Right lobe of liver (tissue), 6 donors: ENCODE measurements at regions of chr3 and their contacts with region 1.

Region 1: DNA sequence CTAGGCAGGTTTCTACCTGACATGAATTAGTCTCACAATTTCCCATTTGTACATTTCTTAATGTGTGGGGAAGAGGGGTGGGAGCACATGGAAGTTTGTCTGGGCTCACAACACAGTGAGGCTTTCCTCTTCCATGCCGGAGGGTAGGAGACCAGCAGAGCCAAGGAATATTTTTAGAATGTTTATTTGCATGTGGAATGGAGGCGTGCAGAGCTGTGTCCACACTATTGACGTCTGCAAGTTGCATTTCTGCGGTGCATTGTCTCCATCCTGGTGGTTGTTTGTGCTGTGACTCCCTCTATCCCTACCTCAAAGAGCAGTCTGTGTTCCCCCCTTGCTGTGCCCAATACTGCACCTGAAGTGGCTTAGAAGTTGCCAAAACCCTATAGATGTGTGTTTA is 103.1 kb upstream of the LRTM1 start:
- DNase-seq: no peak
- ATAC-seq: no peak
- H3K4me3 ChIP-seq: no peak overlapping the region
- H3K27ac ChIP-seq: no peak overlapping the region
- H3K4me1 ChIP-seq: no peaks in the 10 kb centered on the region
- H3K27me3 ChIP-seq: no peaks in the 10 kb centered on the region
- CTCF ChIP-seq: no peak
- POLR2A ChIP-seq: no peak

Region 2: DNA sequence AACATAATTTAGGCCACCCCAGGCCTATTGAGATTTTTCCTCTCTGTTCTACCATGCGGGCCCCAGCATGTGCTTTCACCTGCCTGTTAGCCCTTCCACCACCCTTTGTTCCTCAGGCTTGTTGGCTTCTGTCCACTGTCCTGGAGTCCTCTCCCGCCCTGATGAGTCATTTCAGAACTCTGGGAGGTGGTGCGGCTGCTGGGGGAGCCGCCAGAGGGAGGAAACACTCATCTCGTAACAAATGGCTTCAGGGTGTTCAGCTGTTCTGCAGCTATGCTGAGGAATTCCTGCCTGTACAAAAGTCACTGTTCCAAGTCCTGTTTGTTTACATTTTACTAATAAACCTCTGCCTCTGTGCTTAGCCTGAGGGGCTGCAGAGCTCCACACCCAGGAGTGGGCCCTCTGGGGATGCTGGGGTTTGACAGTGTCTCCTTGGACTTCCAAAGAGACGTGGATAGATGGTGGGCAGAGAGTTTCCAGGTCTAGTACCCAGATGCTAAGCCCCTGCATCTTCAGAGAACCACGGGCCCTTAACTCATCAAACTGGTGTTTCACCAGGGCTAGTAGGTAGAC is 139.3 kb before region 1 on chr3:
- intact Hi-C with region 1: no loop called
- DNase-seq: peak in 1 of 3 donors; percentile 24
- ATAC-seq: peak; percentile 40 to 75 (median 60)
- H3K4me3 ChIP-seq: no peak overlapping the region
- H3K27ac ChIP-seq: no peak overlapping the region
- H3K4me1 ChIP-seq: no peaks in the 10 kb centered on the region
- H3K27me3 ChIP-seq: no peaks in the 10 kb centered on the region
- CTCF ChIP-seq: peak; percentile 7 to 17 (median 12)
- POLR2A ChIP-seq: no peak

Region 3: GRCh38 chr3:54917174-54917573 is 113.8 kb before region 1 on chr3:
- intact Hi-C with region 1: no loop called
- DNase-seq: no peak
- ATAC-seq: no peak
- H3K4me3 ChIP-seq: no peak overlapping the region
- H3K27ac ChIP-seq: no peak overlapping the region
- H3K4me1 ChIP-seq: no peaks in the 10 kb centered on the region
- H3K27me3 ChIP-seq: no peaks in the 10 kb centered on the region
- CTCF ChIP-seq: no peak
- POLR2A ChIP-seq: no peak

Region 4: GRCh38 chr3:55662683-55663082 is 631.7 kb after region 1 on chr3:
- intact Hi-C with region 1: loop called in 1 of 2 experiments (anchors 5 kb)
- DNase-seq: no peak
- ATAC-seq: no peak
- H3K4me3 ChIP-seq: no peak overlapping the region
- H3K27ac ChIP-seq: no peak overlapping the region
- H3K4me1 ChIP-seq: no peaks in the 10 kb centered on the region
- H3K27me3 ChIP-seq: no peaks in the 10 kb centered on the region
- CTCF ChIP-seq: no peak
- POLR2A ChIP-seq: no peak

Region 5: DNA sequence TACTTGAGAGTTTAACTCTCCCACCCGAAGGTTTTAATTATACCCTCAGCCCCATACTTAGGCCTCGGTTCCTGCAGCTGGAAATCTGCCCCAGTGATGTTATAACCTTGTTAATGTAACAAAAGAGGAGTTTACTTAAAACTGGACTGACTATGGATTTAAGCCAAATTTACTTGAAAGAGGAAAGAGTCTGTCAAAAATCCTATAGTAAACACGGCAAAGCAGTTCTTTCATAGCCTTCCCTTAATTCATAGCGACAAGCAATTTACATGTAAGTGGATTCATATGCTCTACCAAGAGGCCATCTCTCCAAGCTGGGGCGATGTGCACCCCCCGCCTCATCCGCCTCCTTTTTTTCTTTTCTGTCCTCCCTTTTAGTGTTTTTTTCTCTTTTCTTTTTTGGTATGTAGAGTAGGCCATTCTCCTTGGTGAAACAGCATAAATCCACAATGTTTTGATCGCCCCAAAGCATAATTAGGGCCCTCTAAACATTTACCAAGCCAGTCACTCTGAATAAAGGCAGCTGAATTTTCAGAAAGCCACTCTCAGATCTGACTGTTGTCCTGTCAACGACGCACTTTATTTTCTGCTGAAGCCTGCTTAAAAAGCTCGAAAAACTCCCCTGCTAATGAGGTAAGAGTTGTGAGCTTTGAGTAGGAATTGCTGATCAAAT is 829.2 kb after region 1 on chr3:
- intact Hi-C with region 1: no loop called
- DNase-seq: no peak
- ATAC-seq: no peak
- H3K4me3 ChIP-seq: no peak overlapping the region
- H3K27ac ChIP-seq: no peak overlapping the region
- H3K4me1 ChIP-seq: no peaks in the 10 kb centered on the region
- H3K27me3 ChIP-seq: no peaks in the 10 kb centered on the region
- CTCF ChIP-seq: no peak
- POLR2A ChIP-seq: no peak